Sigmoid colon (tissue), 7 donors: ENCODE measurements at regions of chr11 and their contacts with region 1.

Region 1: GRCh38 chr11:115759622-115760460 is 255.6 kb upstream of the CADM1 start:
- DNase-seq: peak; percentile 68
- H3K4me3 ChIP-seq: peak overlapping the region; percentile 50 to 80 (median 72)
- H3K27ac ChIP-seq: peak overlapping the region; percentile 38 to 66 (median 54)
- H3K4me1 ChIP-seq: peaks cover 0 to 22% (median 15%) of the 10 kb centered on the region in 4 donors
- H3K27me3 ChIP-seq: no peaks in the 10 kb centered on the region
- CTCF ChIP-seq: no peak
- EP300 ChIP-seq: no peak
- POLR2A ChIP-seq: no peak

Region 2: DNA sequence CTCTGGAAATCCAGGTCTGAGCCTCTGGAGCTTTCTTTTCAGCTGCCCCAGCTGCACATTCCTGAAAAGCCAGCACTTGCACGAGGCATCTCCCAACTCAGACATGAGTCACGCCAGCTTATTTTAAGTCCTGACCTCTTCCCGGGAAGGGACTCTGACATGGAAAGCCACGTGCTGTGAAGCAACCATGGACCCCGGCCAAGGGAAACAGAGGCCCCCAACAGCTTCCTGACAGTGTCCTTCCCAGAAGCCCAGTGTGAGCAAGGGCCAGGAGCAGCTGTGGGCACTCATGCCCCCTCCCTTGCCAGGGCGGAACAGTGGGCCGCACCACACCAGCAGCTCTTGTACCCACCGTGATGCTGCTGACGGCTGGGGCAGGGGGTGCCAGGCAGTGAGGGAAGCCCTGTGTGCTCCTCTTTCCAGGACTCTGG is 136.8 kb before region 1 on chr11:
- intact Hi-C with region 1: loop called (anchors 5 kb)
- DNase-seq: peak; percentile 89
- H3K4me3 ChIP-seq: no peak overlapping the region
- H3K27ac ChIP-seq: peak overlapping the region in 3 of 4 donors; percentile 63 to 76 (median 70)
- H3K4me1 ChIP-seq: peaks cover 0 to 20% (median 15%) of the 10 kb centered on the region in 4 donors
- H3K27me3 ChIP-seq: no peaks in the 10 kb centered on the region
- CTCF ChIP-seq: no peak
- EP300 ChIP-seq: peak in 2 of 4 donors; percentile 20 to 89
- POLR2A ChIP-seq: no peak